ENCODE measurements at regions of chr7 and their contacts with region 1.

Region 1: GRCh38 chr7:34091323-34091917 is 186.1 kb downstream of the BMPER start:
- H3K4me3 ChIP-seq: no peak overlapping the region
- H3K27ac ChIP-seq: no peak overlapping the region
- H3K4me1 ChIP-seq: no peaks in the 10 kb centered on the region
- CTCF ChIP-seq: no peak

Region 2: DNA sequence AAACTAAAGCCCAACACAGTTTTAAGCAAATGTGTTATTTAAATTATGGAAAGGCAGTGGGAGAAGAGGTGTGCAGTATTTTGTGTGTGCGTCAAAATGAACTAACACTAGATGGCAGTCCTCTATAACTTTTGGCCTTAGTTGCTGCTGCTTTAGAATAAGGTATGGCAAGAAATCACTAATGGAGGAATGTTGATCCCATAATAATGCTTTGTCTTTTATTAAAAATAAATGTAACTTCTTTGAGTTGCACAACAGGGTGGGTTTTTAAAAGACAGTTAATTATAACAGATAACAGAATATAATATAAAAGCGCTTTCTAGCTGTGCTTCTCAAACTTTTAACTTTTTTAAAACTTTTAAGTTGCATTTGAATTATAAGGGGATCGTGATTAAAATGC is 905.6 kb before region 1 on chr7:
- CTCF ChIA-PET with region 1: interaction called, 16 read pairs
- POLR2A ChIA-PET with region 1: no interaction called
- H3K4me3 ChIP-seq: no peak overlapping the region
- H3K27ac ChIP-seq: no peak overlapping the region
- H3K4me1 ChIP-seq: no peaks in the 10 kb centered on the region
- CTCF ChIP-seq: no peak

Region 3: GRCh38 chr7:33909318-33909717 is 182.1 kb before region 1 on chr7:
- CTCF ChIA-PET with region 1: interaction called, 11 read pairs
- POLR2A ChIA-PET with region 1: no interaction called
- H3K4me3 ChIP-seq: no peak overlapping the region
- H3K27ac ChIP-seq: no peak overlapping the region
- H3K4me1 ChIP-seq: peaks cover 3% of the 10 kb centered on the region; the same call in 1 of the 2 replicates
- CTCF ChIP-seq: no peak

Region 4: DNA sequence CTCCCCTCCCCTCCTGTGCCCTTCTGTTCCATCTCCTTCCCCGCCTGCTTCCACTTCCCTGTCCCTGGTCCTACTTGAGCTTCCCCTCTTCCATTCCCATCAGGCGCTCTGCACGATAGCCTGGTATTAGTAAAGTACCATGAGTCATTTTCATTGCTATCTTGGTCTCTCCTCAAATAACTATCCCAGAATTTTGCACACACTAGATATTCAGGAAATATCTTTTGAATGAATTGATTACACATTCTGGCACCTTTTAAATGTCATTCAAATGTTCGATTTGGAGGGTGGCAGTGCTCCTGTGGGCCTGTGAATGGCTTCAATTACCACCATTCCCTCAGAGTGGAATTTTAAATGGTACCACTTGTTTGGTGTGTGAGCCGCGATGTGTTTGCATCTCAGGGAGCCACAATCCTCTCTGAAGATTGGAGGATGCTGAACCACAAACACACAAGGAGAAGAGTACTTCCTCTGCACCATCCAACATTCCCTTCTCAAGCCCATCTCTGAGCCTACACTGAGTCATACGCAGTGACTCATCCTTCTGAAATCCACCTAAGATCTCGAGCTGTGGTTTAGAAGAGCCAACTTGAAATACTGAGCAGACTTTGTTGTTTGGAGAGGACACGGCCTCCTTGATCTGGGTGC is 104.4 kb before region 1 on chr7:
- CTCF ChIA-PET with region 1: interaction called, 135 read pairs
- POLR2A ChIA-PET with region 1: no interaction called
- H3K4me3 ChIP-seq: no peak overlapping the region
- H3K27ac ChIP-seq: no peak overlapping the region
- H3K4me1 ChIP-seq: no peaks in the 10 kb centered on the region
- CTCF ChIP-seq: no peak

Region 5: DNA sequence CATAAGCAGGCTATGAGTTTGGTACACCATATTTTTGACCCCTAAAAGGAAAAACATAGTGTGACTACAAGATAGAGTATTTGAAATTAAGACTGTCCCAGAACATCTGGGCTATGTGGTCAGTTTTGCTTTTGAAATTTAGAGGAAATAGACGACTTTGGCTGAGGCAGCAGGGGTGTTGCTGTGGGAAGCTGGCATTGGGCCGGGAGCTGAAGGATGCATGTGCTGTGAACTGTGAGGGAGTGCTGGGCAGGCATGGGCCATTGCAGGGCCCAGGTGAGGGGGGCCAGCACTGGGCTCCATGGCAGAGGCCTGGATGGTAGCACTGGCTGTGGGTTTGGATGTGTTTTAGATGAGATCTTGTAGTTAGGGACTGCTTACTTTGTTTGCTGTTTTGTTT is 17.7 kb before region 1 on chr7:
- CTCF ChIA-PET with region 1: interaction called, 11 read pairs
- POLR2A ChIA-PET with region 1: no interaction called
- H3K4me3 ChIP-seq: no peak overlapping the region
- H3K27ac ChIP-seq: no peak overlapping the region
- H3K4me1 ChIP-seq: peaks cover 18% of the 10 kb centered on the region
- CTCF ChIP-seq: no peak

Region 6: DNA sequence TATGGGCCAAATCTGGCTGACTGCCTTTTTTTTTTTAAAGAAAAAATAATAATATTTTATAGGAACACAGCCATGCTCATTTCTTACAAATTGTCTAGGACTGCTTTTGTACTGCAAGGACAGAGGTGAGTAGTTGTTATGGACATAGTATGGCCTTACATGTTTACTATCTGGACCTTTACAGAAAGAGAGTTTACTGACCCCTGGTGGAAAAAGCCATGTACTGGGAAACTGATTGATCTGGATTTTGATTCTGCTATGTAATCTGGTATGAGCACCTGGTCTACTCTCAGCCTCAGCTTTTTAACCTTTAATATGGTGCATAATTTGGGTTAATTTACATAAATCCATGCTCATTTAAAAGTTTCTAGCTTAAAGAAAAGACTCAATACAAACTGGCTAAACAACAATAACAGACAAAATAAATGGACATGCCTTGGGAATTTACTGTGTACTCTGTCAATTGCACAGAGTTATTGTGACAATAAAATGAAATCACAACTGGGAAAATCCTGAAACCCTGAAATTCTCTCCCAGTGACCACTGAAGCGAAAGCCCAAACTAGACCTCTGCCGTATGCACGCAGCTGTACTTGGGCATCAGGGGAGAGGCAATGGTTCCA is 74.6 kb after region 1 on chr7:
- CTCF ChIA-PET with region 1: interaction called, 12 read pairs
- POLR2A ChIA-PET with region 1: no interaction called
- H3K4me3 ChIP-seq: no peak overlapping the region
- H3K27ac ChIP-seq: no peak overlapping the region
- H3K4me1 ChIP-seq: no peaks in the 10 kb centered on the region
- CTCF ChIP-seq: no peak

Measured in HEK293 (cell line).